ENCODE measurements at regions of chr6 and their contacts with region 1.

Region 1: DNA sequence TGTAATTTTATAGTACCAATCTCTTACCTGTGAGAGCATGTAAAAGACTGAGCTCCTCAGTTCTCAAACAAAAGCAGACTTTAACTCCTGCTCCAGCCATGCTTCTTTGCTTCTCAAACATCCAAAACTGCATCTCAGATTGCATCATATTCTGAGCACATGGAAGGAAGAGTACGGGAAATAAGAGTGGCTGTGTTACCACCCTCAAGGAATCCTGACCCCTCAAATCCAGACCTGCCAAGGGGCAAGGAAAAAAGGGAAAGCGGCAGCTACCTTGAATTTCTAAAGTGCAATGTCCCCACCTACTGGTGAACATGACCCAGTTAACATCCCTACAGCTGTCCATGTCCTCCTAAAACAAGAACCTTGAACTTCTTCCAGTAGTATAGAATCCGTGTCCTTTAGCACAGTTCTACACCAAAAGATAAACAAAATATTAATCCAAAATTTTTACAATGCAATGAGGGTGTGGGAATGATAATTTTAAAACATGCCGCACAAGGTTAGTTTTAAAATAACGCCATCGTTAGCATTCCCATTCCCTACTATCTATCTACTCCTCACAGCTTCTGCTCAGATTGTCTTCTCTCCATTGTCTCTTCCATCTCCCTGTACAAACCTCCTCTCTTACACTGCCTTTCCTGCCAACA is 34.1 kb upstream of the HLA-DQB1 start:
- DNase-seq: peak in 1 of 2 donors; percentile 17
- H3K4me3 ChIP-seq: no peak overlapping the region
- CTCF ChIP-seq: no peak
- POLR2A ChIP-seq: no peak

Region 2: DNA sequence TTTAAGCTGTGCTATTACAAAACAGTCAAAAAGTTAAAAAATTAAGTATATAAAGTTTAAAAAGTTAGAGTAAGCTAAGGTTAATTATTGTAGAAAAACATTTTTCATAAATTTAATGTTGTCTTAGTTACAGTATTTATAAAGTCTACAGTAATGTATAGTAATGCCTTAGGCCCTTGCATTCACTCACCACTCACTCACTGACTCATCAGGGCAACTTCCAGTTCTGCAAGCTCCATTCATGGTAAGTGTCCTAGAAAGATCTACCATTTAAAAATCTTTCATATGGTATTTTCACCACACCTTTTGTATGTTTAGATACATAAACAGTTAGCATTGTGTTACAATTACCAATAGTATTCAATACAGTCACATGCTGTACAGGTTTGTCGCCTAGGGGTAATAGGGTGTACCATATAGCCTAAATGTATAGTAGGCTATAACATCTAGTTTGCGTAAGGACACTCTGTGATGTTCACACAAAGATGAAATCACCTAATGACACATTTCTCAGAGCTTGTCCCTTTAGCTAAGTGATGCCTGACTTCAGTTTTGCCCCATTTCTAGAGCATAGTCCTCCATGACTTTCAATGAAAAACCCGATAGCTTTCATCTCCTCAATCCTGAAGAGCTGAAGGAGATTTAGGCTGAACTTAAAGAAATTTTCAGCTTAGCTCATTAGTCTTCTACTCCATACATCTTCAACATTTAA is 275.8 kb before region 1 on chr6:
- intact Hi-C with region 1: loop called (anchors 10 kb)
- DNase-seq: no peak
- H3K4me3 ChIP-seq: no peak overlapping the region
- CTCF ChIP-seq: no peak
- POLR2A ChIP-seq: no peak

Region 3: GRCh38 chr6:32622545-32623401 is 77.7 kb before region 1 on chr6:
- intact Hi-C with region 1: no loop called
- DNase-seq: no peak
- H3K4me3 ChIP-seq: no peak overlapping the region
- CTCF ChIP-seq: no peak
- POLR2A ChIP-seq: no peak

Region 4: GRCh38 chr6:33213166-33213988 is 512.9 kb after region 1 on chr6:
- intact Hi-C with region 1: no loop called
- DNase-seq: peak in 1 of 2 donors; percentile 87
- H3K4me3 ChIP-seq: no peak overlapping the region
- CTCF ChIP-seq: no peak
- POLR2A ChIP-seq: no peak